Aorta (tissue), 5 donors: ENCODE measurements at regions of chr3 and their contacts with region 1.

Region 1: GRCh38 chr3:65894679-65895453 is 143.9 kb downstream of the MAGI1 start:
- DNase-seq: no peak
- ATAC-seq: peak; percentile 63
- H3K4me3 ChIP-seq: no peak overlapping the region
- H3K27ac ChIP-seq: peak overlapping the region; percentile 57 to 79
- H3K4me1 ChIP-seq: peaks cover 0 to 8% of the 10 kb centered on the region in 2 donors
- H3K27me3 ChIP-seq: no peaks in the 10 kb centered on the region

Region 2: GRCh38 chr3:66047311-66048050 is 152.6 kb after region 1 on chr3:
- intact Hi-C with region 1: loop called in 1 of 2 experiments (anchors 5 kb)
- DNase-seq: peak; percentile 74 to 85
- ATAC-seq: peak; percentile 70
- H3K4me3 ChIP-seq: no peak overlapping the region
- H3K27ac ChIP-seq: peak overlapping the region in 1 of 2 donors; percentile 54
- H3K4me1 ChIP-seq: no peaks in the 10 kb centered on the region
- H3K27me3 ChIP-seq: no peaks in the 10 kb centered on the region